ENCODE measurements at regions of chr6 and their contacts with region 1.

Region 1: DNA sequence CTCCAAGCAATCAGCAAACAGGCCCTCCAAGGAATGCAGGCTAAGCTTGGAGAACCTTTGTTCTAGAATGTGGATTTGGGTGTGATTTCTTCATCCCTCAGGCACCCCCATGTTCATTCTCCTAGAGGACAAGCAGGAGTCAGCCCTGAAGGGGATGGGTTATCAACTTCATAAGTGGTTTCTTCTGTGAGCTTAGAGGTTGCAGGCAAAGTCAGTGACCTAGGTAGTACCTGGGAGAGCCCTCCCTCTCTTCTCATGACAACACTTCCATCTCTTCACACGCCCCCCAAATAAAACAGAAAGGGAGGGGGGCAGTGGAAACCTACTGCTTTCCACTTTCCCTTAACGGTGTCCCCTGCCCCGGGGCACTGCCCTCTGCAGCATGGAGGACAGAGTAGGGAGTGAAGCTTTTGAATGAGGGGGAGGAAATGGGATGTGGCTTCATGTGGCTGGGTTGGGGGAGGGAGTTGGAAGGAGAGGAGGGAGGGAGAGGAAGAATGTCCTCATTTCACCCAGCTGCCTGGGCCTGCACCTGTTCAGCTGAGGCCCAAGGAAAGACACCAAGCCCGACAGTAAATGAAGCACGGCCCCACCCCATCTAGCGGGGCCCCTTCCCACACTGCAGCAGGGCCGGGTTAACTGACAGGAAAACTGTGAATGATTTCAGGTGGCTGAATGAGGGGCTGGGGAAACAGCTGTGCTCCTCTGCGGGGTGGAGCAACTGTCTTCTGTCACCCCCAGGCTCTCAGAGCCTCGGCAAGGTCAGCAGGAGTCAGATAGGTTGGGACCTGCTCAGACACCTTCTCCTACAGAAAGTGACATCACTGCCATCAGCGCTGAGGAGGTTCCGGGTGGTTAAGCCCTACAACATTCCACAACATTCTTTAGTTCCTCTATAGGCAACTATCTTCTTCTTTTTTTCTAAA is 40.1 kb upstream of the TAF8 start:
- DNase-seq: no peak
- ATAC-seq: peak; percentile 38
- H3K4me3 Mint-ChIP-seq: peak overlapping the region; percentile 59
- H3K27ac Mint-ChIP-seq: peak overlapping the region; percentile 87
- H3K4me1 Mint-ChIP-seq: peaks cover 59% of the 10 kb centered on the region
- H3K27me3 Mint-ChIP-seq: no peaks in the 10 kb centered on the region
- CTCF ChIP-seq: no peak

Region 2: DNA sequence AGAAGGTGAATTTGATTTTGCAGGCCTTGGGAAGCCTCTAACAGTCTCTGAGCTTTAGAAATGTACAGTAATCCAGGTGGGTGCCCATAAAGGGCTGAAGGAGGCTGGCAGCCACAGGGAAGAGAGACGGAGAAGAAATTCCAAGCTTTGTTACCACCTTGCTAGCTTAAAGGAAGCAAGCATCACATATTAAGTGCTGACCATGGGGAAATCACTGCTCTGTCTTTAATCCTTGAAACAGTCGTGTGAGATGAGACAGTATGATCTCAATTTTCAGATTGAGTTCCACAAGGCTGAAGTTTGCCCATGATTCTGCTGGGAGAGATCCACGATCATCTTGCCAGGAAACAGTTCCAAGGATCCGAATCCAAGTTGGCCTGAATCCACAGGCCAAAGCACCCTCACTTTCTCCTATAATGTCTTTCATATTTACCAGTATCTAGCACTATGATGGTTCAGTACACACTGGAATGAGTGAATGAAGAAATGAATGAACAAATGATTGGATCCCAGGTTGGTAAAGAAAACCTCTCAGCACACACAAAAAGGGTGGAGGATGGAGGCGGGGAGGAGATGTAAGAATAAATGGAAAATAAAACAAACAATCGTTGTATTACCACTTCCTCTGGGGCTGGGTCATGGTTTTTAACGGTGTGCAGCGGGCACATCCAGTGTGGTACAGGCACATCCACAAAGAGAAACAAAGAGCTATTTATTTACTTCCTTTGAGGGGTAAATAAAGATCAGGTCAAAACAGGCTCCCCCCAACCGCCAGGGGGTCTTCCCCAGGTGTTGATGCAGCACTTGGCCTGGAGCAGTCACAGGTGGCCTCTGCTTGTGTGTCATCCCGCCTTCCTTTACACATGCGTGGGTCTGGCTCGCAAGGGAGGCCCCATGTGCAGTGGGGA is 11.9 kb after region 1 on chr6:
- CTCF ChIA-PET with region 1: no interaction called
- POLR2A ChIA-PET with region 1: interaction called, 29 read pairs
- intact Hi-C with region 1: loop called (anchors 1 kb)
- DNase-seq: peak; percentile 58
- ATAC-seq: peak; percentile 38
- H3K4me3 Mint-ChIP-seq: peak overlapping the region; percentile 75
- H3K27ac Mint-ChIP-seq: peak overlapping the region; percentile 99
- H3K4me1 Mint-ChIP-seq: peaks cover 83% of the 10 kb centered on the region
- H3K27me3 Mint-ChIP-seq: no peaks in the 10 kb centered on the region
- CTCF ChIP-seq: no peak

Region 3: DNA sequence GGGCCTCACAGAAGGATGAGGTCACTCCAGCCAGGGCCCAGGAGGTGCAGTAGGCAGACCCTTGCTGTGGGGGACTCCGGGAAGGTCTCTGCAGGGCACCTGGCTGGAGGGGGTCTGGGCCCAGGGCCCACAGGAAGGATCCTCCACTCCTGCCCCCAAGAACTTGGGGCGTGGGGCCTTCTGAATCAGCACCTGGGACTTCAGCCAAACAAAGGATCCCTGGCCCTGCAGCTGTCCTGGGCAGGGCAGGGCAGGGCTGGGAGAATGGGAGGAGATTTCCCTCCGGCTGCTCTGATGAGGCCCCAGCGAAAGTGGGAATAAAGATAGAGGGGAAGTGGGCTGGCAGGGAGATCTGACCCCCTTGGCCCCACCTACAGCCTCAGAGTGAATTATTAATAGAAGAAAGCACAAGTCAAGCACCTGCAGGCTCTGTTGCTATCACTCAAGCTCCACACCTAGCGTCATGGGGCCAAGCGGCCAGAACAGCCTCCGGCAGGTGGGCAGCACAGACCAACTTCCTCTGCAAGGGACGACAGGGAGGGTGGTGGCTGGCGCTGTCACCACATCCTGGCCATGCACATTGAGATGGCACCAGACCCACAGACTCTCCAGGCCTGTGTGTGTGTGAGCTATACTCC is 269.0 kb after region 1 on chr6:
- CTCF ChIA-PET with region 1: no interaction called
- POLR2A ChIA-PET with region 1: no interaction called
- intact Hi-C with region 1: no loop called
- DNase-seq: no peak
- ATAC-seq: no peak
- H3K4me3 Mint-ChIP-seq: no peak overlapping the region
- H3K27ac Mint-ChIP-seq: no peak overlapping the region
- H3K4me1 Mint-ChIP-seq: peaks cover 10% of the 10 kb centered on the region
- H3K27me3 Mint-ChIP-seq: no peaks in the 10 kb centered on the region
- CTCF ChIP-seq: no peak